ENCODE measurements at regions of chr3 and their contacts with region 1.

Region 1: GRCh38 chr3:192825657-192826200 is 91.9 kb downstream of the MB21D2 start:
- DNase-seq: no peak
- ATAC-seq: no peak
- H3K4me3 ChIP-seq: no peak overlapping the region
- H3K27ac ChIP-seq: no peak overlapping the region
- H3K4me1 ChIP-seq: peaks cover 23 to 27% of the 10 kb centered on the region in 2 donors
- H3K27me3 ChIP-seq: no peaks in the 10 kb centered on the region
- CTCF ChIP-seq: no peak
- POLR2A ChIP-seq: no peak

Region 2: DNA sequence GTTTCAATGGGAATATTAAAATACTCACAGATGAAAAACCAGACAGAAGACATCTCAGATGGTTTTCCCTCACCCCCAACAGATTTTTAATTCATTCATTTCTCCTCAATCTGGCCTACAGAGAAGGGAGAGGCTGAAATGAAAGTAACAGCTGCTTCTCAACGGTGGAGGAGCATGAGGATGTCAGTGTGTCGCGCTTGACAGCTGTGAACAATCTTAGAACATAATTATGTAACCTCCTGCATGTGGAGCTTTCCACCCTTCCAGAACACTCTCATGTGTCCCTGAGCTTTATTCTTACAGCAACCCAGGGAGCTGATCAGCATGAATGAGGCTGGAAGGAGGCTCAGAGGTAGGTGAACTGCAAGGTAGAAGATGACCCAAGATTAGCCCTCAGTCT is 39.2 kb after region 1 on chr3:
- in situ Hi-C with region 1: no loop called
- intact Hi-C with region 1: loop called (anchors 5 kb)
- DNase-seq: peak; percentile 23 to 39
- ATAC-seq: peak; percentile 93 to 96
- H3K4me3 ChIP-seq: no peak overlapping the region
- H3K27ac ChIP-seq: peak overlapping the region in 2 of 4 donors; percentile 52 to 56
- H3K4me1 ChIP-seq: peaks cover 11 to 23% of the 10 kb centered on the region in 2 donors
- H3K27me3 ChIP-seq: no peaks in the 10 kb centered on the region
- CTCF ChIP-seq: no peak
- POLR2A ChIP-seq: no peak

Region 3: DNA sequence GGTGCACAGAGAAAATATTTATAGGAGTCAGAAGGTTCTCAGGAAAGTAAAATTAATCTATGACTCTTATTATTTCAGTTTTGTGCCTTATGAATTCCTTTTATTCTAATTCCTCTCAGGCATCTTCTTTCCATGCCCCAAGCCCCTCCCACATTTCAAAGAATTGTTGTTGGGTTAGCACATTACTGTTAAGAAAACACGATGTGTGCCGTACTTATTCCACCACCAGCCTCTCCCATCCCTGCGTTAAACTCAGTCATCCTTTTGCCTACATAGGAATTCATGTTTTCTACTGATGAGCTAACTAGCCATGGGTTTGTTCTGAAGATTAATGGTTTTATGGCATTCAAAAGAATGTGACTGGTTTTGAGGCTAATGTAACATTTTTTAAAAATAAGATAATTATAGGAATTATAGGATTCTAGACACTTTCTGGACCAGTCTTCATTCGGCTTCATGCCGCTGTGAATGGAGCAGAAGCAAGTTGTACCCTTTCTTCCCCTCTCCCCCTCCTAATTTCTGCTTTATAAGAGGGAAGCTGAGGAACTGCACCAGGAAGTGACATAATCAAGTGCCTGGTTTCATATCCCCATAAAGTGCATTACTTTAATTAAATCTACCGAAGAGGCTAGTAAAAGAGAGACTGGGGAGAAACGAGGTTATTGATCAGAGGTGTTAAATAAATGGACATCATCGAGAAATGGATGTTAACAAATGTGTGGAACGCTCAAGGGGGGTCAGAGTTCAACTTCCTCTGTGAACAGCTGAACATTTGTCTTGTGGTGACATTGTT is 104.2 kb after region 1 on chr3:
- in situ Hi-C with region 1: loop called in 1 of 4 experiments (anchors 10 kb)
- intact Hi-C with region 1: no loop called
- DNase-seq: no peak
- ATAC-seq: no peak
- H3K4me3 ChIP-seq: no peak overlapping the region
- H3K27ac ChIP-seq: no peak overlapping the region
- H3K4me1 ChIP-seq: no peaks in the 10 kb centered on the region
- H3K27me3 ChIP-seq: no peaks in the 10 kb centered on the region
- CTCF ChIP-seq: no peak
- POLR2A ChIP-seq: no peak

Region 4: GRCh38 chr3:192943393-192943792 is 117.7 kb after region 1 on chr3:
- in situ Hi-C with region 1: no loop called
- intact Hi-C with region 1: no loop called
- DNase-seq: no peak
- ATAC-seq: peak; percentile 58 to 65
- H3K4me3 ChIP-seq: no peak overlapping the region
- H3K27ac ChIP-seq: no peak overlapping the region
- H3K4me1 ChIP-seq: no peaks in the 10 kb centered on the region
- H3K27me3 ChIP-seq: no peaks in the 10 kb centered on the region
- CTCF ChIP-seq: no peak
- POLR2A ChIP-seq: no peak

Measured in gastrocnemius medialis (tissue), 4 donors.